ENCODE measurements at regions of chrX and their contacts with region 1.

Region 1: GRCh38 chrX:45849253-45849862 is 648.7 kb upstream of the DIPK2B start:
- DNase-seq: peak; percentile 40
- H3K4me3 Mint-ChIP-seq: peak overlapping the region; percentile 95
- H3K27ac Mint-ChIP-seq: peak overlapping the region; percentile 99
- H3K4me1 Mint-ChIP-seq: peaks cover 39% of the 10 kb centered on the region
- H3K27me3 Mint-ChIP-seq: no peaks in the 10 kb centered on the region

Region 2: DNA sequence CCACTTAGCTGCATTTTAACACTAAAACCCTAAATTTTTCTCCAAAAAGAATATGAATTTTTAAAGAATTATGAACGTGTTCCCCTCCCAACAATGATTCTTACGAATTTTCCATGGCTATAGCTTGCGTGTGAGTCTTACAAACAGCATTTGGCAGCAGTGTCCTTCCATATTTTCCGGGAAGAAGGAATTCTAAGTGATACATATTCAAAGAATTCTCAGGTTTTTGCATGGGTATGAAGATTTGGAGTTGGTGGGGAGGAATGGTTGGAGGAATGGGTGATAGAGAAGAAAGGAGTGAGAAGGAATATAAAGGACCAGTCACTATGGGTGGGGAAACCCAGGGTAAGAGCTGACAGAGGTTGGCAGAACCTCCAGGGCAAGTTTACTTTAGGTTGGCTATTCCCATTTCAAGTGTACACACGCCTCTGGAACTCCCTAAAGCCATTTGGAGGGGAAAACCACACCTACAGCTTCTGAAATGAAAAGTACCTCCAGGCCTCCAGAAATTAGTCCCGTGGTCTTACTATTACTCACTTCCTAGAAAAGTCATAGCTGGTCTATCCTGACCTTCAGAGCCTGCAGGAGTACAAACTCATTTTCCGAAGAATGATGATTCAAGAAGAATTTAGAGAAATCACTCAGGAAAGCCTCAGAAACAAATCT is 227.8 kb before region 1 on chrX:
- CTCF ChIA-PET with region 1: no interaction called
- POLR2A ChIA-PET with region 1: no interaction called
- intact Hi-C with region 1: loop called (anchors 5 kb)
- DNase-seq: peak; percentile 31
- H3K4me3 Mint-ChIP-seq: no peak overlapping the region
- H3K27ac Mint-ChIP-seq: peak overlapping the region; percentile 83
- H3K4me1 Mint-ChIP-seq: peaks cover 23% of the 10 kb centered on the region
- H3K27me3 Mint-ChIP-seq: peaks cover 2% of the 10 kb centered on the region

Region 3: GRCh38 chrX:45758319-45758718 is 91.0 kb before region 1 on chrX:
- CTCF ChIA-PET with region 1: no interaction called
- POLR2A ChIA-PET with region 1: interaction called, 7 read pairs
- intact Hi-C with region 1: loop called (anchors 2 kb)
- DNase-seq: peak; percentile 73
- H3K4me3 Mint-ChIP-seq: peak overlapping the region; percentile 77
- H3K27ac Mint-ChIP-seq: peak overlapping the region; percentile 92
- H3K4me1 Mint-ChIP-seq: peaks cover 72% of the 10 kb centered on the region
- H3K27me3 Mint-ChIP-seq: no peaks in the 10 kb centered on the region

Region 4: GRCh38 chrX:45806410-45807121 is 42.8 kb before region 1 on chrX:
- CTCF ChIA-PET with region 1: interaction called, 9 read pairs
- POLR2A ChIA-PET with region 1: interaction called, 14 read pairs
- intact Hi-C with region 1: loop called (anchors 1 kb)
- DNase-seq: peak; percentile 68
- H3K4me3 Mint-ChIP-seq: peak overlapping the region; percentile 64
- H3K27ac Mint-ChIP-seq: peak overlapping the region; percentile 95
- H3K4me1 Mint-ChIP-seq: peaks cover 85% of the 10 kb centered on the region
- H3K27me3 Mint-ChIP-seq: no peaks in the 10 kb centered on the region

Region 5: GRCh38 chrX:46208225-46208854 is 359.0 kb after region 1 on chrX:
- CTCF ChIA-PET with region 1: no interaction called
- POLR2A ChIA-PET with region 1: no interaction called
- intact Hi-C with region 1: loop called (anchors 10 kb)
- DNase-seq: no peak
- H3K4me3 Mint-ChIP-seq: no peak overlapping the region
- H3K27ac Mint-ChIP-seq: no peak overlapping the region
- H3K4me1 Mint-ChIP-seq: peaks cover 32% of the 10 kb centered on the region
- H3K27me3 Mint-ChIP-seq: no peaks in the 10 kb centered on the region

Region 6: GRCh38 chrX:46325312-46325877 is 476.0 kb after region 1 on chrX:
- CTCF ChIA-PET with region 1: no interaction called
- POLR2A ChIA-PET with region 1: interaction called, 5 read pairs
- intact Hi-C with region 1: loop called (anchors 5 kb)
- DNase-seq: peak; percentile 77
- H3K4me3 Mint-ChIP-seq: peak overlapping the region; percentile 23
- H3K27ac Mint-ChIP-seq: peak overlapping the region; percentile 79
- H3K4me1 Mint-ChIP-seq: peaks cover 62% of the 10 kb centered on the region
- H3K27me3 Mint-ChIP-seq: no peaks in the 10 kb centered on the region